Activated T-helper 1 cell treated with anti-CD3 and anti-CD28 coated beads, Interleukin-12 subunit alpha, Interleukin-12 subunit beta, Interleukin-2, Interleukin-4 antibody, amounts not matched to agents 30 ng/mL and 10 ng/mL and 1 ng/mL, durations not matched to agents 14 hours and 24 hours and 36 hours (primary cell): ENCODE measurements at regions of chr12 and their contacts with region 1.

Region 1: DNA sequence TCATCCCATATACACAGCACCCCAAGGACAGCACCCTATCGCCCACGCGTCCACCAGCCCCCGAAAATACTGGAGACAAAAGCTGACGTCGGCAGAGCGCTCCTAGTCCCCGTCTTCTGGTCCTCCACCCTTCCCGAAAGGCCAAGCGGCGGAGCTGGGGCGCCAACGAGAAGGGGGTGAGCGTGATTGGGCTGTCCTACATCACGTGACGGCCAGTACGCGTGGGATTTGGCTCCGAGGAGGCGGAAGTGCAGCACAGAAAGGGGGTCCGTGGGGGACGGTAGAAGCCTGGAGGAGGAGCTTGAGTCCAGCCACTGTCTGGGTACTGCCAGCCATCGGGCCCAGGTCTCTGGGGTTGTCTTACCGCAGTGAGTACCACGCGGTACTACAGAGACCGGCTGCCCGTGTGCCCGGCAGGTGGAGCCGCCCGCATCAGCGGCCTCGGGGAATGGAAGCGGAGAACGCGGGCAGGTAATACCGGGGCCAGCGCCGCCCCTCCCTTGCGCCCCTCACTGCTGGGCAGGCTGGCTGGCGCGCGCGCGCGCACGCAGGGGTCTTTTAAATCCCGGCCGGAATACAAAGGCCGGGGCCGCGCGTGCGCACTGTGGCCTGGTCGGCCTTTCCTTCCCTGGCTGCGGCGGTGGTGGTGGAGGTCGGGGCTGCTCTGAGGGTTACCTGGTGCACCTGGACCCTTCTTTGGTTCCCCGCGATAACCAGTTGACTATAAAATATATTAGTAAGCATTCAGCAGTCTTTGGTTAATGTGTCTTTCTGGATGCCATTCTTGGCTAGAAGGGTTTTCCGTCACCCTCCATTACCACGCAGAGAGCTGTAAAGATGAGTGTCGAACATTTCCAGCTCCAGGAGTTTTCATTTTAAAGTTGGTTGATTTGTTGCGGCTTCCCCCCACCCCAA is at the start of gene TDG:
- DNase-seq: peak; percentile 95
- H3K4me3 Mint-ChIP-seq: peak within 1 kb of the TSS; percentile 98
- H3K27ac Mint-ChIP-seq: peak within 1 kb of the TSS; percentile 99
- H3K4me1 Mint-ChIP-seq: peaks cover 47% of the 10 kb centered on the region
- H3K27me3 Mint-ChIP-seq: no peaks in the 10 kb centered on the region
- total RNA-seq, gene TDG: 80.4 and 81.6 TPM in 2 replicates

Region 2: GRCh38 chr12:103915306-103915705 is 50.5 kb before region 1 on chr12:
- intact Hi-C with region 1: no loop called
- DNase-seq: no peak
- H3K4me3 Mint-ChIP-seq: no peak overlapping the region
- H3K27ac Mint-ChIP-seq: no peak overlapping the region
- H3K4me1 Mint-ChIP-seq: no peaks in the 10 kb centered on the region
- H3K27me3 Mint-ChIP-seq: peaks cover 6% of the 10 kb centered on the region

Region 3: DNA sequence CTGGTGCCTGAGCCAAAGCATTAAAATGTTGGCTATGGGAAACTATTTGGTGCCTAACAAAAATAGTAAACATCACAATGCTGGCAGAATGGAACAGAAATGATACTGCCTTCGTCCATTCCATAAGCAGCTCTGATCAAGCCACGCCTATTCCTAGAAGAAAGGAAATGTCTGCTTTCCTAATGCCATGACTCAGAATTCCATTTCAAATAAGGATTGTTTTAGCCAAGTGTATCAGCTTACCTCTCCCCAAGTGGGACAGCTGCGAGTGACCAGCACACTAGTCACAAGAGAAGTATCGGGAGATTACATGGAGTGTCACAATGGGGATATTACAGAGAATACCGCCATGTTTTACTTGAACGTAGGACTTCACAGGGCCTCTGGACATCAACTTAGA is 45.4 kb after region 1 on chr12:
- intact Hi-C with region 1: no loop called
- DNase-seq: no peak
- H3K4me3 Mint-ChIP-seq: no peak overlapping the region
- H3K27ac Mint-ChIP-seq: no peak overlapping the region
- H3K4me1 Mint-ChIP-seq: no peaks in the 10 kb centered on the region
- H3K27me3 Mint-ChIP-seq: peaks cover 26% of the 10 kb centered on the region

Region 4: DNA sequence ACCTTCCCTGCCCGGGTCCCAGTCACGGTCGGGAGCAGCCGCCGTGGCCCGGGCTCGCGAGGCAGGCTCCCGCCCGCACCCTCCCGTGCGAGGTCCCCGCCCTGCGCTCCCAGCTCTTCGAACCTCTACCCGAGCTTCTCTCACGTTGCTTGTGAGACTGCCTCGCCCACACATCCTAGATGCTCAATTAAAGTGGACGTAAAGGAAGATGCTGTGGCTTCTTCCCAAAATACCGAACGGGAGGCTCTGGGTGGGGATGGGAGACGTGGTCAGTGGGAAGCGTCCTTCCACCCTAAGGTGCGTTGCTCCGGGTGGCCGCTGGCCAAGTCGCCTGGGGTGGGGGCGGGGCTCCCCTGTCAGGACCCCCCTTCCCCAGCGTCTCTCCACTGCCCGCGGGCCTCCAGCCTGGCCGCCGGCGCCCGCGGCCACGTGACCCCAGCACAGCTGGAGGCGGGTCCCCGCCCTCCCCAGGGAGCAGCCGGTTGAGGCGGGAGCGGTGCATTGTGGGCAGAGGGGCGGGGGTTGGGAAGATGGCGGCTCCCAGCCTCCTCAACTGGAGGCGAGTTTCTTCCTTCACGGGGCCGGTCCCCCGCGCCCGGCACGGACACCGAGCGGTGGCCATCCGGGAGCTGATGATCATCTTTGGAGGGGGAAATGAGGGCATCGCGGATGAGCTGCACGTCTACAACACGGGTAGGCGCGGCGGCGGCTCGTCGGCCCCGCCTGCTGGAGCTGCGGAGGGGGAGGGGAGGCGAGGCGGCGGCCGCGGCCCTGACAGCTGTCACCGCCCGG is 98.4 kb after region 1 on chr12 and contains the start of gene HCFC2:
- intact Hi-C with region 1: loop called (anchors 1 kb)
- DNase-seq: peak; percentile 88
- H3K4me3 Mint-ChIP-seq: peak within 1 kb of the TSS; percentile 95
- H3K27ac Mint-ChIP-seq: peak within 1 kb of the TSS; percentile 86
- H3K4me1 Mint-ChIP-seq: peaks cover 36% of the 10 kb centered on the region
- H3K27me3 Mint-ChIP-seq: peaks cover 24% of the 10 kb centered on the region
- total RNA-seq, gene HCFC2: 8.5 and 8.9 TPM in 2 replicates

Region 5: GRCh38 chr12:104303538-104304151 is 337.8 kb after region 1 on chr12 and contains the start of gene EID3:
- intact Hi-C with region 1: loop called (anchors 5 kb)
- DNase-seq: peak; percentile 92
- H3K4me3 Mint-ChIP-seq: peak within 1 kb of the TSS; percentile 93
- H3K27ac Mint-ChIP-seq: peak within 1 kb of the TSS; percentile 99
- H3K4me1 Mint-ChIP-seq: peaks cover 66% of the 10 kb centered on the region
- H3K27me3 Mint-ChIP-seq: no peaks in the 10 kb centered on the region
- total RNA-seq, gene EID3: 10.5 and 10.6 TPM in 2 replicates

Region 6: DNA sequence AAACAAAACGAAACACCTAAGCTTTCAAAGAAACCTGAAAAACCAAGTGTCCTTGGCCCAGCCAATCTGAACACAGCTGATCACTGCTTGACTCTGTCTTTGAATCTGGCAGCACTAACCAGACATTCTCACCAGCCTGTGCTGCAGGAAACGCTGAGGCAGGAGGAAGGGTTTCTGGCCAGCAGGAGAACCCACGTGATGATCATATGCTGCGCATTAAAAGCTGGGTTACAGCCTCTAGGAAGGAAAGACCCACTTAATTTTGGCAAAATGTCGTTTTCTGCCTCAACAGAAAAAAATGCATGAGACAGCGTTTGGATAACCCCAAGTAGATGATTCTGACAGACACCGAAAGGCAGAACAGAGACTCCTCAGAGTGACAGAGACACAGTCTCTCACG is 1260.4 kb after region 1 on chr12:
- intact Hi-C with region 1: loop called (anchors 5 kb)
- DNase-seq: peak; percentile 24
- H3K4me3 Mint-ChIP-seq: peak overlapping the region; percentile 43
- H3K27ac Mint-ChIP-seq: no peak overlapping the region
- H3K4me1 Mint-ChIP-seq: peaks cover 71% of the 10 kb centered on the region
- H3K27me3 Mint-ChIP-seq: no peaks in the 10 kb centered on the region